Cardiac septum (tissue), 1 donor: ENCODE measurements at regions of chr11 and their contacts with region 1.

Region 1: GRCh38 chr11:19903620-19904069 is 191.0 kb downstream of the NAV2 start:
- DNase-seq: no peak

Region 2: GRCh38 chr11:19742588-19743292 is 160.9 kb before region 1 on chr11:
- intact Hi-C with region 1: loop called (anchors 2 kb)
- DNase-seq: peak; percentile 86

Region 3: DNA sequence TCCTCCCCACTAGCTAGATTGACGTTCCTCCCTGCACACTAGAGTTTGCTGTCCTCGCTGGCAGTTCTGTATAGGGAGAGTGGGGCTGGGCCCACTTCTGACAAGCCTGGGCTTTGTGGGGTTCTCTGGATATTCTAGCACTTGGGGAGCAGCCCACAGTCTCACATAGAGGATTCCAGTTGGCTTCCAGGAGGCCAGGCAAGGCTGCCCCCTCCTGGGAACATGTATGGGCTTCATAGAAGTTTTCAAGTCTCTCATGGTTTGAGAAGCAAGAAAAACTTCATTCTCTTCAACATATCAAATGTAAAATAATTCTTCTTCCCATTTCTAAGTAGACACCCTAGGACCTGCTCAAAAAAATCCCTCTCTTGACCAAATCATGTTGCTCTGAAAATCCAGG is 103.5 kb before region 1 on chr11:
- intact Hi-C with region 1: loop called (anchors 5 kb)
- DNase-seq: no peak

Region 4: DNA sequence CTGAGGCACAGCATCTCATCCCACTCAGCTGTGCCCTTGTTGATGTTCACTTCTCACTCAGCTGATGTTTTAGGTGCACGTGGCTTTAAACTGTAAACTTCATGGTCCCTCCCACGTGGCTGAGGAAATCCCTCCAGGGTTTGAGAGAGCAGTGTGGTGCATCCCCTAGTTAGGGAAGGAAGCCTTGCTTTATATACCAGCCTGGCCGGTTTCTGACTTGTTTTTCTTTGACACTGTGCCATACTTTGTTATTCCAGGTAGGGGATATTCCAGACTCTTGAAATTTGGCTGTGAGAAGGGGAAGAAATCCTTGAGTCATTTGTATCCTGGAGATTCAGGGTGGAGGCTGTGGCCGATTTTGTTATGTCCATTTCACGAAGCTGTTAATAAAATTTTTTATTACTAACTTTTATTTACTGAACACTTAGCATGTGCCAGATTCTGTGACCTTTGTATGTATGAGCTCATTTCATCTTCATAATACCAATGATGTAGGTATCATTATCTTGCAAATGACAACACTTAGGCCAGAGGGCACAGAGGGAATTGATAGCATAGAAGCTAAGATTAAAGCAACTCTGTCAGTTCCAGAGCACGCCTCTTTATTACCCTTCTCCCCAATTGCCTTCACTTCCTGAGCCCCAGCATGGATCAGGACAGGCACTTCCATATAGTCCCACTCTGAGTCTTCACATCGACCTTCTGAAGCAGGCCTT is 74.4 kb before region 1 on chr11:
- intact Hi-C with region 1: no loop called
- DNase-seq: no peak